Left colon (tissue), 2 donors: ENCODE measurements at regions of chr1 and their contacts with region 1.

Region 1: GRCh38 chr1:59699227-59699847 is 115.4 kb upstream of the HOOK1 start:
- DNase-seq: no peak
- ATAC-seq: peak; percentile 60

Region 2: DNA sequence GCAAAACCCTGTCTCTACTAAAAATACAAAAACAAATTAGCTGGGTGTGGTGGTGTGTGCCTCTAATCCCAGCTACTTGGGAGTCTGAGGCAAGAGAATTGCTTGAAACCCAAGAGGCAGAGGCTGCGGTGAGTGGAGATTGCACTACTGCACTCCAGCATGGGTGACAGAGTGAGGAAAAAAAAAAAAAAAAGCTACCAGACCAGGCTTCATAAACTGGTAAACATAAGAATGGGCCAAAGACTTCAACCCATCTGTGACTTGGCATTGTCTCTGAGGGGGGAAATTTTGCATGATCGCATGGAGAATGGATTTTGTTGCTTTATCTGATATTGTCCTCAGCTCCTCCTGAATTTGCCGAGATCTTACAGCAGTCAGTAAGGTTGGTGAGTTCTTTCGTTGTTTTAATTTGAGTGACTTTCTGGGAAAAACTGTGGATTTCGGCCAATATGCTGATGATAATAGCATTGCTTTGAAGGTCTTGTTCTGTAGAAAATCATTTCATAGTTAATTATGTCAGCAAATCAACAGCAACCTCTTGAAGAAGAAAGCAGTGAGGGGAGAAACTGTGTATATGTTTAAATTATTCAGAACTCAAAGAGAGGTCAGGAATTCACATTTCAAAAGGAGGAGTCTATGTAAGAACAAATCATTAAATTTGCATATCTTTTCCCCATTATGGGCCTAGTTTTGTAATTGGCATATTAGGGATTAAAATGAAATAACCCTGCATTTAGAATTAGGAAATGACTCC is 389.4 kb before region 1 on chr1:
- intact Hi-C with region 1: loop called in 1 of 2 experiments (anchors 10 kb)
- DNase-seq: no peak
- ATAC-seq: no peak

Region 3: GRCh38 chr1:59892841-59893811 is 193.8 kb after region 1 on chr1:
- intact Hi-C with region 1: no loop called
- DNase-seq: peak in 1 of 2 donors; percentile 14
- ATAC-seq: peak; percentile 84